ENCODE measurements at regions of chr1 and their contacts with region 1.

Region 1: DNA sequence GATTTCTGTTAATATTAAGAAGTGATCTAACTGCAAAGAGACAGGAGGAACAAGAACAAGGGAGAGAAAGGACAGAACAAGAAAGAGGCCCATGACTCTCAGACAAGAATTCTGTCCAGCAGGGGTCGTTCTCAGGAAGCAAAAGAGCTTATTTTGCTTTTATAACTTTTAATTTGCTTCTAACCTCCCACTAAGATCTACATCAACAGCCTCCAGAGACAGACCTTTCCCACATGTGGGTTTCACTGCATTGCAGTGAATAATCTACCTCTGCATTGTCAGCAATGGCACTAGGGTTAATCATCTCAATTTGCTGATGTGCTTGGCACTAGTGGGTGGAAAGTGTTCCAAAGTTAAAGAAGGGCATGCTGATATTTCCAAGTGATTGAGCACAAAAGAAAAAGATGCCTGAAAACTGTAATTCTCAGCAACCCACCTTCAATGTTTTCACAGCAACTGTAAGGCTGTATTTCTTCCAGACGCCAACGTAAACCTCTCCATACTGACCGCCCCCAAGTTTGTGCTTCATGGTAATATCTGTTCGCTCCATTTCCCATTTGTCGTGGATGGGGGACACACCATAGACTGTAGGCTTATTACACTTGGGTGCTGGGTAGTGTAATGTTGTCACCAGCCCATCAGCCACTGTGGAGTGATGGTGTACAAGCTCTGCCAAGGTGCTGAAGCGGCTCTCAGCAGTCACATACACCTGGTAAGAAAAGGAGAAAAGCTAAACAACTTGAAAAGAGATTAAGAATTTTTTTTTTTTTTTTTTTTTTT is 39.5 kb downstream of the TOR3A start:
- DNase-seq: peak; percentile 76
- H3K4me3 Mint-ChIP-seq: no peak overlapping the region
- H3K27ac Mint-ChIP-seq: peak overlapping the region; percentile 82
- H3K4me1 Mint-ChIP-seq: peaks cover 18% of the 10 kb centered on the region
- H3K27me3 Mint-ChIP-seq: no peaks in the 10 kb centered on the region
- CTCF ChIP-seq: peak; percentile 73

Region 2: DNA sequence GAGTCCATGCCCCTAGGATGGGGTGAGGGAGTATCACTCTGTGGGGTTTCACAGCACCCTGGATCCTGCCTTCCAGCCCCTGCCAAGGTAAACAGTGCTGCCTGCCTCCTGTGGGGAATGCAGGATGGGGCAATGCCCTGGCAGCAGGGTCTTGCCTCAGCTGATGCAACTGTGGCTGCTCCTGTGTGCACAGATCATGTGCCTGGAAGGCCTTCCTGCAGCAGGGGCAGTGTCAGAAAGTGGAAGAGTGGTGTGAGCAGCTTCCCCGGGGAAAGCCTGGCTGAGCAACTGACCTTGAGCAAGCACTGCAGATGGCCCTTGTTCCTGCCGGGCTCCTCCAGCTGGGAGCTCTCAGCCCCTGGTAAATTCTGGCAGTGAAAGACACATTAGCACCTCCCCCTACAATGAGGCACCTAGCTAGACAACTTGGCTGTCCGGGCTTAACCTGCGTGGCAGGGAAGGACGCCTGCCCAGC is 29.6 kb before region 1 on chr1:
- CTCF ChIA-PET with region 1: interaction called, 11 read pairs
- POLR2A ChIA-PET with region 1: no interaction called
- intact Hi-C with region 1: no loop called
- DNase-seq: peak; percentile 98
- H3K4me3 Mint-ChIP-seq: peak overlapping the region; percentile 24
- H3K27ac Mint-ChIP-seq: peak overlapping the region; percentile 69
- H3K4me1 Mint-ChIP-seq: peaks cover 26% of the 10 kb centered on the region
- H3K27me3 Mint-ChIP-seq: no peaks in the 10 kb centered on the region
- CTCF ChIP-seq: no peak

Region 3: DNA sequence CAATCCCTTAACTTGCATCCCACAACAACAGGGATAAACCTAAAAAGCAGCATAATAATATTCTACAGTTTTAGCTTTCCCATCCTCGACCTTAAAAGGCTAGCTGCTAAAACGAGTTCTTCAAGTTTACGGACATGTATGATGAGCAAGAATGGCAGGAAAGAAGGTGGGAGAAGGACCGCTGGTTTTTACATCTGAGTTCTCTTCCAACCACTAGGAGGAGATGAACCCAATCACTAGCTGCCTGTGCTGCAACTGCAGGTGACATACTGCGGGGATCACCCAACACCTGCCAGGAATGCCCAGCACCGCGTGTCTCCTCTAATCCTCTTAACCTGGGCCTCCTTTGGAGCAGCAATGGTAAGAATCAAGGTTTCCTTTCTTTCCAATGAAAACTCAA is 16.0 kb before region 1 on chr1:
- CTCF ChIA-PET with region 1: interaction called, 90 read pairs
- POLR2A ChIA-PET with region 1: no interaction called
- intact Hi-C with region 1: no loop called
- DNase-seq: peak; percentile 27
- H3K4me3 Mint-ChIP-seq: no peak overlapping the region
- H3K27ac Mint-ChIP-seq: no peak overlapping the region
- H3K4me1 Mint-ChIP-seq: no peaks in the 10 kb centered on the region
- H3K27me3 Mint-ChIP-seq: no peaks in the 10 kb centered on the region
- CTCF ChIP-seq: peak; percentile 43

Region 4: DNA sequence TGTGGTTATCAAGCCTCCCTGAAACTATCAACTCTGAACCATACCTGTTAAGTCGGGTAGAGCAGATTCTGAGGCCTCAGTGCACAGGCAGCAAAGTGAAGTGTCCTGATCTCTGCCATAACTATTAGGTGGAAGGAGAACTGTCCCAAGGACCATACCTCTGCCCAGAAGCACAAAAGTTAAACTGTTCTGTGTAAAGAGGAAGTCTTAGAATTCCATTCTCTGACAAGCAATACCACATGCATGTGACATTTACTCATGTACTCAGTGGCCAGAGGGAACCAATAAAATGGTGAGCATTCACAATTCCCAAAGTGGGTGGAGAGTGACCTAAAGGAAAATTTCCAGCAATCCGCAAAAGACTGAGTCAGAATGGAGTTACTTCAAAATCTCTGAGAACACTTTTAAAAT is 21.5 kb after region 1 on chr1:
- CTCF ChIA-PET with region 1: interaction called, 29 read pairs
- POLR2A ChIA-PET with region 1: interaction called, 10 read pairs
- intact Hi-C with region 1: no loop called
- DNase-seq: peak; percentile 97
- H3K4me3 Mint-ChIP-seq: peak overlapping the region; percentile 72
- H3K27ac Mint-ChIP-seq: peak overlapping the region; percentile 79
- H3K4me1 Mint-ChIP-seq: peaks cover 38% of the 10 kb centered on the region
- H3K27me3 Mint-ChIP-seq: no peaks in the 10 kb centered on the region
- CTCF ChIP-seq: no peak

Region 5: DNA sequence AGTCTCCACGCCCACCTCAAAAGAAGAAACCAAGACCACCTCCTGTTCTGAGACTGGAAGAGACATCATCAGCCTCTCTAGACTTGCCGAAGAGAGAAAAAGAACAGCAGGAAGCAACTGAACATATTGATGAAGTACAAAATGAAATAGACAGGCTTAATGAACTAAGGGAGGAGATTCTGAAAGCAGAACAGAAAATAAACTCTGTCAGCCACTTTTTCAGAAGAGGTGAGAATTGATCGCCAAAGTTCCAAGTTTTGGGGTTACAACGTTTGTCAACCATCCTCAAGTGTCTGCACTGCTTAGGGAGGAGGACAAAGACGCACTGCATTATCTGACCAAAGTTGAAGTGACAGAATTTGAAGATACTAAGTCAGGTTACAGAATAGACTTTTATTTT is 62.5 kb after region 1 on chr1:
- CTCF ChIA-PET with region 1: interaction called, 30 read pairs
- POLR2A ChIA-PET with region 1: no interaction called
- intact Hi-C with region 1: no loop called
- DNase-seq: no peak
- H3K4me3 Mint-ChIP-seq: no peak overlapping the region
- H3K27ac Mint-ChIP-seq: no peak overlapping the region
- H3K4me1 Mint-ChIP-seq: peaks cover 37% of the 10 kb centered on the region
- H3K27me3 Mint-ChIP-seq: no peaks in the 10 kb centered on the region
- CTCF ChIP-seq: no peak

Region 6: GRCh38 chr1:179206812-179207211 is 85.5 kb after region 1 on chr1:
- CTCF ChIA-PET with region 1: interaction called, 23 read pairs
- POLR2A ChIA-PET with region 1: interaction called, 4 read pairs
- intact Hi-C with region 1: no loop called
- DNase-seq: no peak
- H3K4me3 Mint-ChIP-seq: no peak overlapping the region
- H3K27ac Mint-ChIP-seq: no peak overlapping the region
- H3K4me1 Mint-ChIP-seq: peaks cover 16% of the 10 kb centered on the region
- H3K27me3 Mint-ChIP-seq: no peaks in the 10 kb centered on the region
- CTCF ChIP-seq: no peak

Region 7: DNA sequence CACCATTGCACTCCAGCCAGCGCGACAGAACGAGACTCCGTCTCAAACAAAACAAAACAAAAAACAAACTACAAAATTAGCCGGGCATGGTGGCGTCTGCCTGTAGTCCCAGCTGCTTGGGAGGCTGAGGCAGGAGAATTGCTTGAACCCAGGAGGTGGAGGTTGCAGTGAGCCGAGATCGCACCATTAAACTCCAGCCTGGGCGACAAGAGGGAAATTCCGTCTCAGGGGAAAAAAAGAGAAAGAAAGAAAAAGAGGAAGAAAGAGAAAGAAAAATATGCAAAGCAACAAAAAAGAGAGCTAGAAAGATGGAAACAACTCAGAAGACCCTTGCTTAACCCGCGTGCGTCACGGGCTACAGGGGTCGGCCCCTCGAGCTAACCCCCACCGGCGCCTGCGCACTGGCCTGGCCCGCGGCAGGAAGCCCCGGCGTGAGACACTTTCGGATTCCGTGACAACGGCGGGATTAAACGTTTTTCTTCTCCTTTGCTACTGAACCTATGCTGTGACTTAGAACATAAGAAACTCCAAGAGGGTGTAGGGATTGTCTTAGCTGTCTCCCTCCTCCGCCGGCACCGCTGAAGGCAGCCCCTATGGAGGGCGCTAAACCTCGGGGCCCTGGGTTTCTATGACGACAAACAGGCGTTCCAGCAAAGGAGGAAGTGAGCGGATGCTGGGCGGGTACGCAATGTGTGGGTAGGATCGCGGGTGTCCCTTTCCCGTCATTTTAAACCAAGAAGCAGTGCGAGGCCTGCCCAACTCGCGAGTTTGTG is 244.2 kb after region 1 on chr1 and contains the start of gene AXDND1:
- CTCF ChIA-PET with region 1: interaction called, 44 read pairs
- POLR2A ChIA-PET with region 1: interaction called, 4 read pairs
- intact Hi-C with region 1: loop called (anchors 2 kb)
- DNase-seq: peak; percentile 79
- H3K4me3 Mint-ChIP-seq: peak within 1 kb of the TSS; percentile 77
- H3K27ac Mint-ChIP-seq: peak within 1 kb of the TSS; percentile 99
- H3K4me1 Mint-ChIP-seq: peaks cover 5% of the 10 kb centered on the region
- H3K27me3 Mint-ChIP-seq: no peaks in the 10 kb centered on the region
- CTCF ChIP-seq: no peak
- total RNA-seq, gene AXDND1: 1.1 and 1.7 TPM in 2 replicates